ENCODE measurements at regions of chr2 and their contacts with region 1.

Region 1: DNA sequence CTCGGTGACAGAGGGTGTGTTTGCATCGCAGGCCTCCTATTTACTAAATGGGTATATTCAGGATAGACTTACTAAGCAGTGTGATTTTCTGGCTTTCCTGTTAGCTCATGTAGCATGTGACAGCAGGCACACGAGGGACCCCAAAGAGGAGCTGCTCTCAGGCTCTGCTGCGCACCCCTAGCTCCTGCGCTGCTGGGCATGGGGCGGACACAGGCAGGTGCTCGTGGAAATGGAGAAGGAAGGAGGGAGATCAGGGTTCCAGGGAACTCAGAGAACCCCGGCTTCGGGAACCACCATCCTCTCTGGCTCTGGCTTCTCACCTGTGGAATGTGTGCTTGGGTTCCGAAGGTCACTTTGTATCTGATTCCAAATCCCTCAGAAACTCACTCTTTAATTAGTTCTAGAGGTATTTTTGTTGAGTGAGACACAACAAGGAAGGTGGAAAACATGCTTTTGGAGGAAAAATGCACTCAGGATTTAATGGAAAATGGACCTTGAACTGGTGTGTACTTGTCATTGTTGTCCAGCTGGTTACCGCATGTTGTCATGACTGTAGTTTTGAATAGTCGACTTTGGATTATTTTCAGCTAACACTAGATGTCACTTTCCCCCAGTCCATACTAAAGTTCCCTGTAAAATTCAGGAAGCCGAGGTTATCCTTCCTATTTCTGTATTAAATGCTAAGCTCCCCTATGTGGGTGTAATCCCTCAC is 3.5 kb downstream of the SNTG2 start:
- DNase-seq: peak; percentile 9
- H3K4me3 ChIP-seq: no peak overlapping the region
- H3K27me3 ChIP-seq: 0 out of 2 replicates have a peak, but pooled peaks cover 1% of the 10 kb centered on the region
- CTCF ChIP-seq: peak; percentile 49

Region 2: GRCh38 chr2:1136057-1136456 is 181.9 kb after region 1 on chr2:
- CTCF ChIA-PET with region 1: interaction called, 13 read pairs
- POLR2A ChIA-PET with region 1: no interaction called
- DNase-seq: no peak
- H3K4me3 ChIP-seq: no peak overlapping the region
- H3K27me3 ChIP-seq: no peaks in the 10 kb centered on the region
- CTCF ChIP-seq: peak; percentile 54

Region 3: GRCh38 chr2:1541819-1542475 is 587.8 kb after region 1 on chr2:
- CTCF ChIA-PET with region 1: interaction called, 50 read pairs
- POLR2A ChIA-PET with region 1: no interaction called
- DNase-seq: no peak
- H3K4me3 ChIP-seq: no peak overlapping the region
- H3K27me3 ChIP-seq: peaks cover 1% of the 10 kb centered on the region; the same call in 1 of the 2 replicates
- CTCF ChIP-seq: no peak

Measured in BJ (cell line).